HEK293T (cell line): ENCODE measurements at regions of chrX and their contacts with region 1.

Region 1: GRCh38 chrX:103376118-103376978 is at the start of gene BEX3:
- DNase-seq: peak; percentile 69

Region 2: DNA sequence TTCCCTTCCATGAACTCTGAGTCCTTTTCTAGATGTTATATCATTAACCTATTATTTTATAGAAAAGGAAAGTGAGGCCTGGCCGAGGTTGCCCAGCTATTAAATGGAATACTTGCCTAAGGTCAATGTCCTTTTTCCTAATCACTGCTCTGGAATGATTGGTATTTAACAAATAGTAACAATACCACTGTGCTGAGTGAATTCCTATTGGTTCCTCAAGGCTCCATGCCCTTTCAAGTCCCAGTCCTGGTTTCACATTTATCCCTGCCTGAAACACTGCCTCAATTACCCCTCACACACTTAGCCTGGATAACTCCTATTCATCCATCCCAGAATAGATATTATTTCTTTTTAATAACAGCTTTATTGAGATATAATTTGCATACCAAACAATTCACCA is 13.8 kb before region 1 on chrX:
- CTCF ChIA-PET with region 1: interaction called, 3 read pairs
- POLR2A ChIA-PET with region 1: interaction called, 55 read pairs
- DNase-seq: no peak

Region 3: GRCh38 chrX:103404231-103405208 is 28.2 kb after region 1 on chrX:
- CTCF ChIA-PET with region 1: no interaction called
- POLR2A ChIA-PET with region 1: interaction called, 13 read pairs
- DNase-seq: peak; percentile 75

Region 4: DNA sequence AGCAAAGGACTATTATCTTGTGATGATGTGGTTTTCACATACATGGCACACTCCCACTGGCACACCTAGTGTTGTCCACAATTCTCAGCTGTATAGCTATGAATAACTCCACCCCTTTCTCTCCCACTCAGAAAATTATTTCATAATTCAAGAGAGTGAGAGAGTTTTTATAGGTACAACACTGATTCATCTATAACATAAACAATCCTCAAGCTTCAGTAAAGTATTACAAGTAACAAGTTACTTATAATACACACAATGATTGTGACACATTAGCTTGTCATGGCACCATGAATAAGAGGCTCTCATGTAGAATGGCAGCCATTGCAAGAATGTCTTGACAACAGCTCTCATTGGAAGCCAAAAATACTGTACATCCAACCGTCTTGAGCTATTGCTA is 99.0 kb after region 1 on chrX:
- CTCF ChIA-PET with region 1: no interaction called
- POLR2A ChIA-PET with region 1: no interaction called
- DNase-seq: no peak